ENCODE measurements at regions of chr15 and their contacts with region 1.

Region 1: GRCh38 chr15:43824302-43825246 is at the start of gene MFAP1:
- DNase-seq: peak; percentile 90
- H3K4me3 ChIP-seq: peak within 1 kb of the TSS; percentile 73 to 98
- H3K27ac ChIP-seq: peak within 1 kb of the TSS; percentile 87 to 97
- H3K4me1 ChIP-seq: peaks cover 9 to 10% of the 10 kb centered on the region in 2 experiments; a peak in 3 of 4 replicates
- H3K27me3 ChIP-seq: no peaks in the 10 kb centered on the region
- CTCF ChIP-seq: no peak
- EP300 ChIP-seq: peak in 1 of 2 experiments; percentile 31; a peak in 1 of 4 replicates
- RAD21 ChIP-seq: no peak
- polyA plus RNA-seq, gene MFAP1: 16.5 and 18.4 TPM in 2 replicates

Region 2: DNA sequence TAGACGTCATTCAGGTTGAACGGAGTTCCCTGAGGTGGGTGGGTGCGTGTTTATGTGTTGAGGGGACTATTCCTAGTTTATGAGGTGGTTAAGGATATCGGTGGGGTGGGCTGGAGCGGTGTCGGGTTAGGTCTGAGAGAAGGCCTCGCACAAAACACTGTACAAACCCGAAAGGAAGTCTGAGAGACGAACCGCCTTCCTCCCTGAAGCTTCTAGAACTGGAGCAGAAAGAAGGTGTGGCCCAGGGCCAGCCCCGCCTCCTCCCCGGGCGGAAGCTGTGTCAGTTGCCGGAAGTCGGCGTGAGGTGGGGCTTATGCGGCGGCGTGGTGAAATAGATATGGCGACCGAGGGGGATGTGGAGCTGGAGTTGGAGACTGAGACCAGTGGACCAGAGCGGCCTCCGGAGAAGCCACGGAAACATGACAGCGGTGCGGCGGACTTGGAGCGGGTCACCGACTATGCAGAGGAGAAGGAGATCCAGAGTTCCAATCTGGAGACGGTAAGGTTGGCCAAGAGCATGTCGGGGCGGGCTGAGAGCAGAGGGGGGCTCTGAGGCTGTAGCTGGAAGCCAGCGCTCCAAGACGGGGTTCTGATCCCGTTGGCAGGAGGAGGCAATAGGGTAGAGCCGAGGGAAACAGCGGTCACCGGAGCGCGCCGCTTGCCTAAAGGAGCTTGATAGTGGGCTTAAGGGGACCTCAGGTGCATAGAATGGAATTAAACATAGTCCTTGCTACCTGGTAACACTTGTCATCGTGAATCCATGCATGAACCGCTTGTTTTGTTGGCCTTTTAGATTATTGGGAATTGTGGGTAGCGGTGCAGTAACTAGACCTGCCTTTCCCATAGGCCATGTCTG is 24.1 kb before region 1 on chr15 and contains the start of gene HYPK:
- CTCF ChIA-PET with region 1: no interaction called
- POLR2A ChIA-PET with region 1: interaction called, 14 read pairs
- DNase-seq: peak; percentile 91
- H3K4me3 ChIP-seq: peak within 1 kb of the TSS; percentile 90 to 94
- H3K27ac ChIP-seq: peak within 1 kb of the TSS; percentile 71 to 92
- H3K4me1 ChIP-seq: peaks cover 0 to 13% of the 10 kb centered on the region in 2 experiments
- H3K27me3 ChIP-seq: no peaks in the 10 kb centered on the region
- CTCF ChIP-seq: no peak
- EP300 ChIP-seq: peak in 1 of 2 experiments; percentile 42; a peak in 1 of 4 replicates
- RAD21 ChIP-seq: no peak
- polyA plus RNA-seq, gene HYPK: 8.9 and 11.5 TPM in 2 replicates

Measured in SK-N-SH (cell line).